Uterus (tissue), 4 donors: ENCODE measurements at regions of chr17 and their contacts with region 1.

Region 1: GRCh38 chr17:35612924-35613521 is 25.9 kb downstream of the AP2B1 start:
- DNase-seq: peak in 1 of 2 donors; percentile 20
- H3K4me3 ChIP-seq: no peak overlapping the region
- H3K27ac ChIP-seq: no peak overlapping the region
- H3K4me1 ChIP-seq: no peaks in the 10 kb centered on the region
- H3K27me3 ChIP-seq: no peaks in the 10 kb centered on the region
- CTCF ChIP-seq: peak; percentile 30 to 49 (median 38)
- POLR2A ChIP-seq: no peak

Region 2: GRCh38 chr17:35476283-35476820 is 136.7 kb before region 1 on chr17:
- intact Hi-C with region 1: no loop called
- DNase-seq: no peak
- H3K4me3 ChIP-seq: no peak overlapping the region
- H3K27ac ChIP-seq: no peak overlapping the region
- H3K4me1 ChIP-seq: no peaks in the 10 kb centered on the region
- H3K27me3 ChIP-seq: no peaks in the 10 kb centered on the region
- CTCF ChIP-seq: no peak
- POLR2A ChIP-seq: no peak

Region 3: DNA sequence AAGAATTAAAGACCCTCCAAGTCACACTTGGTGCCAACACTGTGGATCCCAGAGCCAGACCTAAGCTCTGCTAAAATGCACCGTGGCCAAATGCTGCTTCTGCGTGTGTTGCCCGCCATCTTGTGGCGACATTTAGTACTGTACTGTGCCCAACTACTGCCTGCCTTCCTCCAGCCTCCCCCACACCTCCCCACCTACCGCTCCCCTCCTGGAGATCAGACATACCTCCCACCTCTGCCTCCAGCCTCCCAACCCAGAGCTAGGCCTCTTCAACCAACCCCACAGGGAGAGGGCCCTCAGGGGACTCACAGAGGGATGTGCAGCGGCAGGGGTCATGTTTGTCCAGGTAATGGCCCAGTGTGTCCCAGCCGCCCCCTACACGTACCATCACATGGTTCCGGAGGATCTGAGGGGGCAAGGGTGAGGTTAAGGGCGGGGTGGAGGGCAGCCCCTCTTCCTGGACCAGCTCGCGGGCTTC is 134.6 kb after region 1 on chr17:
- intact Hi-C with region 1: loop called (anchors 5 kb)
- DNase-seq: peak; percentile 73 to 74
- H3K4me3 ChIP-seq: no peak overlapping the region
- H3K27ac ChIP-seq: no peak overlapping the region
- H3K4me1 ChIP-seq: peaks cover 0 to 4% of the 10 kb centered on the region in 2 donors
- H3K27me3 ChIP-seq: peaks cover 8 to 15% of the 10 kb centered on the region in 2 donors
- CTCF ChIP-seq: peak; percentile 85 to 91 (median 87)
- POLR2A ChIP-seq: no peak